MCF 10A (cell line): ENCODE measurements at regions of chr1 and their contacts with region 1.

Region 1: DNA sequence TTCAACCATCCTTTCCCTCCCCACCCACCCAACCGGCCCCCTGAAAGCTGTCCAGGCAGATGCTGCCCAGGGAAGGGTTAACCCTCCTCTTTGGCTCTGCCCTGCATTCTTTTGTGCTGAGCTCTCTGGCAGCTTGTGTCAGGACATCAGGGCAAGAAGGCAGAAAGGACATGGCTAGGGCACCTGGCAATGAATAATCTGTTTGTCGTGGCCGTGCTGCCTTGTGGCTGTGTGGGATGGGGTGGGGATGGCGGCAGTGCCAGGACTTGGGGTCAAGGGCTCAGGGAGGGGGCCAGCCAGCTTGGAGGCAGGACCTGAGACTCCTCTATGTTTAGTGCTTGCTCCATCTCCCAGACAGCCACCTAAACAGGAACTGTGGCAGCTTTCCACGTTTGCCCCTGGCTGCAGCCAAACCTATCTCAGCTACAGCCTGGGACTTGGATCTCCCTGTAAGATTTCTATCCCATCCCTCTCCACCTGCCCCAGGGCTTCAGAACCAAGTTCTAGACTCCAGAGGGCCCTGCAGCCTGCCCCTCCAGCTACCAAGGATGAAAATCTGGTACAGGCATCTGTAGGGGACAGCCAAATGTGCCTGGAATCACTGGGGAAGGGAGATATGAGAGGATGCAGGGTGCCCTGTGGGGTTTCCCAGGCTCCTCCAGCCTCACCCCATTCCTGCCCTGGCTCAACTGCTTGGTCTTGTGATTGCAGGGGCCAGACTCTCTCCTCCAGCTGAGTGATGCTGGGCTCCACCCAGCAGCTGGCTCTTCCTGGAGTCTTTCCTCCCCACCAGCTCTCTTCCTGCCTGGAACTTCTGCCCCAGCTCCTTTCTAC is 9.7 kb upstream of the GPR37L1 start:
- DNase-seq: peak; percentile 27
- H3K4me3 Mint-ChIP-seq: no peak overlapping the region
- H3K27ac Mint-ChIP-seq: no peak overlapping the region
- H3K4me1 Mint-ChIP-seq: peaks cover 31% of the 10 kb centered on the region
- H3K27me3 Mint-ChIP-seq: no peaks in the 10 kb centered on the region
- CTCF ChIP-seq: no peak

Region 2: DNA sequence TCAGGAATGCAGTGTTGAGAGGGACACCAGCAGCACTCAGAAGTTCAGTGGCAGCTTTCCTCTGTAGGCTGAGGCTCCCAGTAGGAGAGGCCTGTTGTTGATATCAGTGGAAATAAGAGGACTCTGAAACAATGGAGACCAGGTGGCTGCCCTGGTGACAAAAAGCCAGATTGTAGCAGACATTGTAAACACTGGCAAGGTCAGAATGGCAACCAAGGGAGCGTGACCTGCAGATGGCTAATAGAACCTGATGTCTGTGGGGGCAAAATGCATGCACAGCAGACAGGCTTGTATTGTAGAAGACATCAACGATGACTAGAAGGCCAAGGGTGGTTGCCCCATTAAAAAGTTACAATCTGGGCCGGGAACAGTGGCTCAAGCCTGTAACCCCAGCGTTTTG is 43.4 kb before region 1 on chr1:
- CTCF ChIA-PET with region 1: interaction called, 15 read pairs
- POLR2A ChIA-PET with region 1: interaction called, 3 read pairs
- intact Hi-C with region 1: no loop called
- DNase-seq: no peak
- H3K4me3 Mint-ChIP-seq: no peak overlapping the region
- H3K27ac Mint-ChIP-seq: no peak overlapping the region
- H3K4me1 Mint-ChIP-seq: peaks cover under 1% of the 10 kb centered on the region
- H3K27me3 Mint-ChIP-seq: no peaks in the 10 kb centered on the region
- CTCF ChIP-seq: no peak

Region 3: DNA sequence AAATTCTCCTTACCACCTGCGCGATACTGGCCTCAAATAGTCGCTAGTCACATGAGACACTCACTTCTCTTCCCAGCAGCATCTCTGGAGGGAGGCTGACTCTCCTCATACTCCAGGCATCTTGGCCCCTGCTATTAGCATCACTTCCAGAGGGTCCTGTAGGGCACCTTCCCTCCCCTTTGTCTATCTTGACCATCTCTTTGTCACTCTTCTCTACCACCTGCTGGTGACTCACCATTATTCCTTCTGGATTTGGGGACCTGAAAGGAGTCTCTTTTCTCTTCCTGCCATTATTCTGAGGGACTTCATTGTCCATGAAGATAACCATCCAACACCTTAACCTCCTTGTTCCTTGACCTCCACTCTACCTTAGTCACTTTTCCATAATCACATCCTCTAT is 22.1 kb before region 1 on chr1:
- CTCF ChIA-PET with region 1: interaction called, 11 read pairs
- POLR2A ChIA-PET with region 1: interaction called, 3 read pairs
- intact Hi-C with region 1: no loop called
- DNase-seq: peak; percentile 42
- H3K4me3 Mint-ChIP-seq: no peak overlapping the region
- H3K27ac Mint-ChIP-seq: no peak overlapping the region
- H3K4me1 Mint-ChIP-seq: peaks cover 14% of the 10 kb centered on the region
- H3K27me3 Mint-ChIP-seq: peaks cover 30% of the 10 kb centered on the region
- CTCF ChIP-seq: no peak

Region 4: GRCh38 chr1:202343652-202344349 is 230.7 kb after region 1 on chr1:
- CTCF ChIA-PET with region 1: no interaction called
- POLR2A ChIA-PET with region 1: no interaction called
- intact Hi-C with region 1: no loop called
- DNase-seq: peak; percentile 85
- H3K4me3 Mint-ChIP-seq: no peak overlapping the region
- H3K27ac Mint-ChIP-seq: peak overlapping the region; percentile 14
- H3K4me1 Mint-ChIP-seq: peaks cover 29% of the 10 kb centered on the region
- H3K27me3 Mint-ChIP-seq: no peaks in the 10 kb centered on the region
- CTCF ChIP-seq: peak; percentile 94